ENCODE measurements at regions of chrX and their contacts with region 1.

Region 1: DNA sequence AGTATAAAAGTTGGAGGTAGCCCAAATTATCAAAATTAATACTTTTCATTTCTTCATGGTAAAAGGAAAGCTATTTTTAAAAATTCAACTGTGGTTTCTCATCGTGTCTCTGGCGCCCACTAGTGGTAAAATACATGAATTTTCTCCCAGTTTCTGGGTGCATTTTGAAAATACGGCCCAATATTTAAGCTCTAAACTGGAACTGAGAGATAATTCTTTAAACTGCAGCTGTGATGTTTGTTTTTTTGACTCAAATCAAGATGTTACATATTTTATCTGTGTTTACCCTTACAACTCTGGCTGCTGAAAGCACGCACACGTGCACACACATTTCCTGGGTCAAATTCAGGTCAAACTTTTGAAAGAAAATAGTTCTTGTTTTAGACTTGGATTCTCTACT is 123.9 kb upstream of the ACSL4 start:
- H3K4me3 Mint-ChIP-seq: no peak overlapping the region
- H3K27ac Mint-ChIP-seq: no peak overlapping the region
- H3K4me1 Mint-ChIP-seq: peaks cover 15% of the 10 kb centered on the region
- H3K27me3 Mint-ChIP-seq: no peaks in the 10 kb centered on the region

Region 2: DNA sequence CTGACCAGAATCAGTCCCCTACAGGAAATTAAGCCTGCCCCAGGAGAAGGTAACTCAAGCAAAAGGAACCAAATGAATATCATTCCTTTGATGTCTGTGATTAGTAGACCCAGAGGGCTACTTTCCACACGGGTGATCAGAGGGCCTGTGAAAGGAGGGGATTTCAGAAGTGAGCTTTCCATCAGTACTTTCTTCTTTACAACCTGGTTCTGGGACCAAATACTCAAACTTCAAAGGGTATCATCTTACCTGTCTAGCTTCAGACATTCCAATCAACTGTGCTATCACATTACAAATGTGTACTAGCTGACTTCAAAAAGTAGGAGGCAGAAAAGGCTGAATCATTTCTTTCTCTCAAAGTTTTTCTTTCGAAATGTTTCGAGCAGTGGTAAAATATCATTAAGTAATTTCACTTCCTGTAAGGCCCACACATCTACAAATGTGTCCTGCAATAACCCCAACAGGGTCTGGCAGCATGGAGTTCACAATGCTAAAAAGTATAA is 147.8 kb before region 1 on chrX:
- intact Hi-C with region 1: loop called (anchors 1 kb)
- H3K4me3 Mint-ChIP-seq: no peak overlapping the region
- H3K27ac Mint-ChIP-seq: no peak overlapping the region
- H3K4me1 Mint-ChIP-seq: peaks cover 37% of the 10 kb centered on the region
- H3K27me3 Mint-ChIP-seq: no peaks in the 10 kb centered on the region

Region 3: GRCh38 chrX:109732780-109733657 is 124.0 kb before region 1 on chrX and contains the start of gene ACSL4:
- intact Hi-C with region 1: loop called (anchors 5 kb)
- H3K4me3 Mint-ChIP-seq: peak within 1 kb of the TSS; percentile 96
- H3K27ac Mint-ChIP-seq: peak within 1 kb of the TSS; percentile 98
- H3K4me1 Mint-ChIP-seq: peaks cover 33% of the 10 kb centered on the region
- H3K27me3 Mint-ChIP-seq: no peaks in the 10 kb centered on the region

Region 4: GRCh38 chrX:109797311-109797975 is 59.5 kb before region 1 on chrX:
- intact Hi-C with region 1: no loop called
- H3K4me3 Mint-ChIP-seq: no peak overlapping the region
- H3K27ac Mint-ChIP-seq: no peak overlapping the region
- H3K4me1 Mint-ChIP-seq: no peaks in the 10 kb centered on the region
- H3K27me3 Mint-ChIP-seq: no peaks in the 10 kb centered on the region